PC-9 (cell line): ENCODE measurements at regions of chr9 and their contacts with region 1.

Region 1: DNA sequence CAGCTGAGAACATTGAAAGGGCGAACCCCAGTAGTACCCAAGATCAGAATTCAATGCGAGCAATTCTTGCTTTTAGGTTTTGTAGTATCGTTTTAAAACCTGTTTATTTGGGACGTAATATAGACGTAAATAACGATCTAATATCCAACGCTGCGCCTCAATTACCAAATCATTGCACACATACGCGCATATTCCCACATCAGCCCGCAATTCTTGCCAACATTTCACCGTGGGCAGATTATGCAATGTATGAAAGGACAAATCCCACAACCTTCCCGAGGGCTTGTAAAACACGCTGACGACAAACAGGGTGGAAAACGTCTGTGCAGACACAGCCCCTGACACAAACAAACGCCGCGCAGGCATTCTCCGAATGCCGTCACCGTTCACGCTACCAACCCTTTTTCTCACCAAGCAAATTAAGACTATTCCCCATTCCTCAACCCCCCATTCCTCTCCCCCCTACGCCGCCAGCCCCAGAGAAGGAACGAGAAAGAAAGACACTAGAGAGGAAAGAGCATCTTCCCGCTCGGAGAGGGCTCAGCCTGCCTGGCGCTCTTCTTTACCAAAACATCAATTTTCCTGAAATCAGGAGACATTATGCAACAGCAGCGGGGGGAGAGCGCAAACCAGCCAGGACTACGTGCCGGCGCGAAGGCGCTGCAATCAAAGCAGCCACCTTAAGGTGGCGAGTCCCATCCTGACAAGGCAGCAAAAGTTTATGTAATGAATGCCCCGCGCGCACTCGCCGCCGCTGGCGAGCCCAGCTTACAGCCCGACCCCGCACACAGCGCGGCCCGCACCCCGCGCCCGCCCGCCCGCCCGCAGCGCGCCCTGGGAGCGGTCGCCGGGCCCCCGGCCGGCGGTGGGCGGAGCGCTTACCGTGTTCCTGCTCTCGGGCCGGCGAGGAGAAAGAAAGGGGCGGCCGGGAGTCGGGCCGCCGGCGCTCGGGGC is 597 bp downstream of the NFIL3 start:
- DNase-seq: peak; percentile 57 to 65
- H3K4me3 ChIP-seq: peak overlapping the region; percentile 91
- H3K27ac ChIP-seq: peak overlapping the region; percentile 71
- H3K4me1 ChIP-seq: peaks cover 49% of the 10 kb centered on the region
- H3K27me3 ChIP-seq: no peaks in the 10 kb centered on the region
- CTCF ChIP-seq: no peak

Region 2: GRCh38 chr9:91001146-91001611 is 421.9 kb before region 1 on chr9:
- CTCF ChIA-PET with region 1: no interaction called
- POLR2A ChIA-PET with region 1: no interaction called
- intact Hi-C with region 1: loop called (anchors 1 kb)
- DNase-seq: peak; percentile 94 to 98
- H3K4me3 ChIP-seq: no peak overlapping the region
- H3K27ac ChIP-seq: peak overlapping the region; percentile 74
- H3K4me1 ChIP-seq: peaks cover 22% of the 10 kb centered on the region
- H3K27me3 ChIP-seq: no peaks in the 10 kb centered on the region
- CTCF ChIP-seq: no peak

Region 3: DNA sequence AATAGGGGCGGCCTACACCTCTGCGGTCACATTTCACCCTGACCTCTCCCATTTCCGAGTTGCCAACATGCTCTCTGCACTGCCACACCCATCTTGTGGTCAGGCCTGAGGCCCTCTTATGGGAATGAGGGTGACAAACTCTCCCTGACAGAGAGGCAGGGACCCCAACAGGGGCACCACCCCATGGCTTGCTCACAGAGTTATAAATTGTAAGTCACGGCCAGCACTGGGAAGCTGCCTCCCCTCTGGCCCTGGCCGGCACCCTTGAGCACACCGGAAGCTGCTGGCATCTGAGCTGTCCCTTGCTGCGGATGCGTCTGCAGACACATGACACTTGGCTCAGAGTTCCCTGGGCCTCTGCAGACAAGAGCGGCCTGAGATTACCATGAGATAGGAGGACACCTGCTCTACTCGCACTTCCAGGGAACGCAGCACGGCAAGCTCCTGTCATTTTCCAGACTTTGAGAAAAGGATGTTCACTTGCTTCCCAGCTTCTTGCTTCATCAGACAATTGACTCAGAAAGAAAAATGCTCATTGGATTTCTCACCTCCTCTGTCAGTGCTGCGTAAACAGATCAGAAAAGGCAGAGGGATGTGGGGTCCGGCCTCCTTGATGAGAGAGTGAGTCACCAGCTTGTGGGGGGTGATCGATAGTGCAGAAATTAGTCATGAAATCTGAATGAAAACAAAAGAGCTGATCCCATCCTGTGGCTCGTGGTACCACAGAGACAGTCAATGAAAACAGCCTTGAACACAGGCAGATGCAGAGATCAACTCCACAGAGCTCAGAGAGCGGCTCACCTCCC is 351.6 kb before region 1 on chr9:
- CTCF ChIA-PET with region 1: no interaction called
- POLR2A ChIA-PET with region 1: interaction called, 4 read pairs
- intact Hi-C with region 1: loop called (anchors 1 kb)
- DNase-seq: peak; percentile 82 to 94
- H3K4me3 ChIP-seq: peak overlapping the region; percentile 23; the same call in 1 of the 2 replicates
- H3K27ac ChIP-seq: peak overlapping the region; percentile 87
- H3K4me1 ChIP-seq: peaks cover 23% of the 10 kb centered on the region
- H3K27me3 ChIP-seq: no peaks in the 10 kb centered on the region
- CTCF ChIP-seq: no peak

Region 4: DNA sequence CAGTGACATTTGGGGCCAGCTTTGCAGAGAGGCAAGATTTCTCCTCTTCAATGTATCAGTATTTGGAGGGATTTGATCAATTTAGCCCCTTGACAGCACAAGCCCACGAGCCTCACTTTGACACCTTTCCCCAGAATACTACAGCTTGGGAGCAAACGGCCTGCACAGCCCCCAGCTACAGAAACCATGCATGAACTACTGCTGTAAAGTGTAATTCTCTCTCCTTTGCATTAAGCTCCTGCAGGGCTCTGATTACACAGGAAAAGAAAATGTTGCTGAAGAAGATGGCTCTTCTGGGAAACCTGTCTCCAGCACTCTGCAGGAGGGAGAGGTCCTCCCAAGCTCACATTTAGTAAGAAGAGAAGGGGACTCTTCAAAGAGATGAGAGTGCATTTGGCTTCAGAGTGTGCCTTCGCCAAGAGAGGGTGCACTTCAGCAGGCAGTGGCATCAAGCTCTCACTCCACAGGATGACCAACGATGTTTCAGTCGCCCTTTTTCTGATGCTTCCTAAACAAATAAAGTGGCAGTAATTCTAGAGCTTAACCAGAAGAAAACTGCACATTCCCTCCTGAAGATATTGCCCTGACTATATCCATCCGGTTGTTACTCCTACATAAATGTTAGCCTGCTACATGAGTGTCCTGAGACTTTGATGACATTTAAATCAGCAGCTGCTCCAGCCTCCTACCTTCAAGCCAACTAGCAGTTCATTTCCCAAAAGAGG is 333.5 kb before region 1 on chr9:
- CTCF ChIA-PET with region 1: interaction called, 5 read pairs
- POLR2A ChIA-PET with region 1: no interaction called
- intact Hi-C with region 1: loop called (anchors 2 kb)
- DNase-seq: peak in 1 of 2 experiments; percentile 21
- H3K4me3 ChIP-seq: no peak overlapping the region
- H3K27ac ChIP-seq: no peak overlapping the region
- H3K4me1 ChIP-seq: no peaks in the 10 kb centered on the region
- H3K27me3 ChIP-seq: no peaks in the 10 kb centered on the region
- CTCF ChIP-seq: peak; percentile 47

Region 5: DNA sequence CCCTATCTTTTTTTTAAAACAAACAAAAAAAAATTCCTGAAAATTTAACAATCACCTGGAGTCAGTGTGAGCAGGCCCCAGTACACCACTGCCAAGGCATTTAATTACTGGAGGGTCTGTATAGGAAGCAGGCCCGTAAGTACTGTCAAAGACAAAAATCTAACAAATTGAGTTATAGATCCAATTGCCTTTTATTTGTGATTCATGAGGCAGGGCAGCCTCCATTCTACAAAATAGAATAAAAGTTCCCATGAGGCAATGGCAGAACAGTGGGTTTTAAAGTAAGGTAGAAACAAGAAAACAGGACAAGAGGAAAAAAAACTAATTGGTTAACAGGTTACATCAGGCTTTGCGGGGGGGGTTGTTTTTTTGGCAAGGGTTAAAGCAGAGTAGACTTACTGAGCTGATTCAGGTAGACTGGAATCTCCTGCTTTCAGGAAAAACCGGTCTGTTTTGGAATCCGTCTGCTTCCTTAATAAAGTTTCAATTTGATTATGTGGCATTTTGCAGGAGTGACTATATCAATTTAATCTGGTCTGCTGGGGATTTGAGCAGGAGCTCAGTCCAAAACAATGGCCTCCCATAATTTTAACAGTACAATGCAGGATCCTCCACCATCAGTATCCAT is 110.2 kb before region 1 on chr9:
- CTCF ChIA-PET with region 1: interaction called, 8 read pairs
- POLR2A ChIA-PET with region 1: no interaction called
- intact Hi-C with region 1: loop called (anchors 5 kb)
- DNase-seq: peak; percentile 74 to 98
- H3K4me3 ChIP-seq: no peak overlapping the region
- H3K27ac ChIP-seq: peak overlapping the region; percentile 85
- H3K4me1 ChIP-seq: peaks cover 55% of the 10 kb centered on the region
- H3K27me3 ChIP-seq: no peaks in the 10 kb centered on the region
- CTCF ChIP-seq: no peak

Region 6: DNA sequence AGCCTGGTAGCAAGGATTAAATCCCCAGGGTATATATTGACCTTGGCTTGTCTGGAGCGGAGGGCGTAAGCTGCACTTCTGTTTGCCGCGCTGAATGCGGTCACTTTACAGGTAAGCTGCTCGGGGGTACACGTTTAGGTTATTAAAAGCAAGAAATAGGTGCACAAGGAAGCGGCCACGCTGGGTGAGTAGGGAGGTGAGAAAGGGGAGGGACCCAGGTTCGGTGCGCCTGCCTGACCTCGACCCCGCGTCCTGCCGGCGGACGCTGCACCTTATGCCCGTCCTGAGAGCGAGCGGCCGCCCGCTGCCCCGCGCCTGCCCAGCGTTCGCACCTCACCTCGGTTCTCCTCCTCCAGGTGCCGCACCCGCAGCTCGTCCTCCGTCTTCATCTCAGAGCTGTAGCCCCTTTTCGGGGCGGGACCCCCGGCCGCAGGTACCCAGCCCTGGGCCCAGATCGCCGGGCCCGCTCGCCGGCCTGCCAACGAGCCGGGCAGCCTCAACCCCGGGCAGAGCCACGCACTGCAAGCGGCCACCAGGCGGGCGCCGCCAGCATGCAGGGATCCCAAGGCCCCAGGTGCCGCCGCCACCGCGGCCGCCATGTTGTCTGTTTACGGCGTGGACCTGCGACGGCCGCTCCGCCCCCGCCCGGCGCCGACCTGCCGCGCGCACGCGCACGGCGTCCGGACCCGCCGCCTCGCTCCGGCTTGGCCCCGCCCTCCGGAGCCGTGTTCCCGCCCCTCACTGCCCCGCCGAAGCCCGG is 61.6 kb before region 1 on chr9 and contains the start of gene AUH:
- CTCF ChIA-PET with region 1: interaction called, 5 read pairs
- POLR2A ChIA-PET with region 1: no interaction called
- intact Hi-C with region 1: loop called (anchors 2 kb)
- DNase-seq: peak; percentile 60 to 92
- H3K4me3 ChIP-seq: peak within 1 kb of the TSS; percentile 95
- H3K27ac ChIP-seq: peak within 1 kb of the TSS; percentile 56
- H3K4me1 ChIP-seq: peaks cover 23% of the 10 kb centered on the region
- H3K27me3 ChIP-seq: no peaks in the 10 kb centered on the region
- CTCF ChIP-seq: no peak
- total RNA-seq, gene AUH: 24.9 and 31.1 TPM in 2 replicates

Region 7: GRCh38 chr9:91837981-91838731 is 415.1 kb after region 1 on chr9:
- CTCF ChIA-PET with region 1: interaction called, 12 read pairs
- POLR2A ChIA-PET with region 1: no interaction called
- intact Hi-C with region 1: no loop called
- DNase-seq: peak; percentile 41 to 48
- H3K4me3 ChIP-seq: no peak overlapping the region; the same call in 1 of the 2 replicates
- H3K27ac ChIP-seq: no peak overlapping the region
- H3K4me1 ChIP-seq: peaks cover 11% of the 10 kb centered on the region
- H3K27me3 ChIP-seq: peaks cover 67% of the 10 kb centered on the region
- CTCF ChIP-seq: no peak

Region 8: DNA sequence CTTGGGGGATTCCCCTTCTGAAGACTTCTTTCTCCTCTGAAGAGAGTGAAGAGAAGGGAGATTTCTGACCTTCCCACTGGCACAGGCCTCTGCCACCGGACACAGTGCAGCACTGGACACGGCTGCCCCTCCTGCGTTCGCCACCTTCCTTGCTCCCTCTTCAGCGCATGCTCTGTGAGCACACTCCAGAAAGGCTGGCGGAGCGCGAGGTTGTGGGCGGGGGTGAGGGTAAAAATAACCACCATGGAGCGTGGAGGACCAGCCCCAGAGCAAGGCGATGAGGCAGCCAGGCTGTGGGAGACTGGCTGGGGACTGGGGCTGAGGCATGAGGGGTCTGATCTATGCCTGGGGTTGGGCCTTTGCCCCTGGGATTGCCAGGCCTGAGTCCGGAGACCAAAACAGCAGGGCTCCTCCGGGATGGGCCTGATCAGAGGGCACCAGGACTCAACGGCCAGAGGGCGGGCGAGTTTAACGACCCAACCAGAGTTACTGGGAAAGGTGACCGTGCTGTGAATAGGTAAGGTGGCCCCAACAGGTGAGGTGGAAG is 429.8 kb after region 1 on chr9:
- CTCF ChIA-PET with region 1: no interaction called
- POLR2A ChIA-PET with region 1: no interaction called
- intact Hi-C with region 1: no loop called
- DNase-seq: no peak
- H3K4me3 ChIP-seq: no peak overlapping the region
- H3K27ac ChIP-seq: no peak overlapping the region
- H3K4me1 ChIP-seq: no peaks in the 10 kb centered on the region
- H3K27me3 ChIP-seq: peaks cover 80% of the 10 kb centered on the region
- CTCF ChIP-seq: no peak